Activated T-helper 2 cell treated with anti-CD3 and anti-CD28 coated beads, Interferon-gamma antibody, Interleukin-2, Interleukin-4, amounts not matched to agents 10 μg/mL and 5 μg/mL and 100 μg/mL, durations not matched to agents 14 hours and 24 hours and 36 hours (primary cell): ENCODE measurements at regions of chr12 and their contacts with region 1.

Region 1: GRCh38 chr12:53251477-53252348 is 16.4 kb upstream of the ESPL1 start:
- DNase-seq: peak; percentile 70
- H3K4me3 Mint-ChIP-seq: peak overlapping the region; percentile 94
- H3K27ac Mint-ChIP-seq: peak overlapping the region; percentile 86
- H3K4me1 Mint-ChIP-seq: peaks cover 37% of the 10 kb centered on the region
- H3K27me3 Mint-ChIP-seq: peaks cover 2% of the 10 kb centered on the region

Region 2: GRCh38 chr12:53213348-53213747 is 38.4 kb before region 1 on chr12:
- intact Hi-C with region 1: loop called (anchors 2 kb)
- DNase-seq: peak; percentile 73
- H3K4me3 Mint-ChIP-seq: no peak overlapping the region
- H3K27ac Mint-ChIP-seq: peak overlapping the region; percentile 7
- H3K4me1 Mint-ChIP-seq: peaks cover 59% of the 10 kb centered on the region
- H3K27me3 Mint-ChIP-seq: no peaks in the 10 kb centered on the region

Region 3: DNA sequence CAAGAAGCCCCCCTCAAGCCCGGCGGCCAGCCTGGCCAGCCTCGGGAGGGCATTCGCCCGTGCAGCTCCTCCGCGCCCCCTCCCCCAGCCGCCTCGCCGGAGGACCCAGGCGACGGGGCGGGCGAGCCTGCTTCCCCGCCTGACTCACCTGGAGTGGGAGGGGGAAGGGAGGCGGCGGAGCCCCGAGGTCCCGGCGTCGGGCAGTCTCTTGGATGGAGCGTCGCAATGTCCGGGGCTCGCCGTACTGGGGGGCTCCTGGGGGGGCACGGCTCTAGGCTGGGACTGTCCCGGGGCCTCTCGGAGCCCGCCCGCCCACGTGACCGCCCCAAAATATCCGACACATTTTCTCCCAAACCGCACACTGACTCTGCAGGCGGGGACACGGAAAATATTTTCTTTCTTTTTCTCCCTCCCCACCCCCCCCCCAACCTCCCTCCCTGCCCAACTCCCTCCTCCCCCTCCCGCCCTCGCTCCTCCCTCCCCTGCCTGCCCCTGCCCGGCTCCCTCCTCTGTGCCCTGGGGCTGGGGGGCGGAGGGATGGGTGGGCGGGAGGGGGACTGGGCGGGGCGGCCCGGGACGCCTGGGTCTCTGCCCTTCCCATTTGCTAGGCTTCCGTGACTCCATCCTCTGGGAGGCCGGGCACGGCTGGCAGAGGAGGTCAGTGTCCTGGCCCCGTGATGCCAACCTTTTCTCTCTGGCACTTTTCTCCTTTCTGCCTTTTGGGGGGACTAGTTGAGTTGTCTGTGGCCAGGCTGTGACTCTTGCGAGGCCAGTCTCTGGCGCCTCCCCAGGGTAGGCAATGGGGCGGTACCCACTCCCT is 19.7 kb before region 1 on chr12 and contains the start of gene RARG:
- intact Hi-C with region 1: loop called (anchors 2 kb)
- DNase-seq: peak; percentile 39
- H3K4me3 Mint-ChIP-seq: peak within 1 kb of the TSS; percentile 78
- H3K27ac Mint-ChIP-seq: peak within 1 kb of the TSS; percentile 79
- H3K4me1 Mint-ChIP-seq: peaks cover 38% of the 10 kb centered on the region
- H3K27me3 Mint-ChIP-seq: no peaks in the 10 kb centered on the region
- total RNA-seq, gene RARG: 38.5 and 40.1 TPM in 2 replicates

Region 4: DNA sequence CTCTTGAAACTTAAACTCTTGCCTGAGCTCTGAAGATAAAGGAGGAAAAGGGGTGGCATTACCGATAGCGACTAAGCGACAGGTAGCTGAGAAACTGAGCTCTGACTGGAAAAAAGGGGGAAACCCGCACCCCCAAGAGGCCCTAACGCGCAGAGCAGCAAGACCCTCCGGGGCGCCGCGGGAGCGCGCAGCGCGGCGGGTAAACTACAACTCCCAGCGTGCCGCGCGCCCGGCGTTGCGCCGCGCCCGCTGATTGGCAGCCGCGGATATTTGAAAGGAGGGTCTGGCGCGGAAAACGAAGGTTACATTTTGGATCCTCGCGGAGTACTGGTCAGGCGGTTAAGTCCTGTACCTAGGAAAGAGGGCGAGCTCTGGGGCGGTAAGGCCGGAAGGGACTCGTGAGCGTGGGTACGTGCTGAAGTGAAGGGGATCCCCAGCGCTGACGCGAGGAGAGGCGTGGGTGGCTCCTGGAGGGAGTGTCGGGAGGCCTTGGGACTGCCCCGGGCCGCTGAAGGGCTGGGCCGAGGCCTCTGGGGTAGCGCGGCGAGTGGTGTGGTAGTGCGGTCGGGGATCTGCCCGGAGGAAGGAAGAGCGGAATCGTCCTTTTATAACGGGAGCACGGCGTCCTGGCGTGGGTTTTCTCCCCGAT is 16.4 kb after region 1 on chr12 and contains the start of gene ESPL1:
- intact Hi-C with region 1: loop called (anchors 1 kb)
- DNase-seq: peak; percentile 79
- H3K4me3 Mint-ChIP-seq: peak within 1 kb of the TSS; percentile 92
- H3K27ac Mint-ChIP-seq: peak within 1 kb of the TSS; percentile 91
- H3K4me1 Mint-ChIP-seq: peaks cover 34% of the 10 kb centered on the region
- H3K27me3 Mint-ChIP-seq: no peaks in the 10 kb centered on the region
- total RNA-seq, gene ESPL1: 72.6 and 75.3 TPM in 2 replicates

Region 5: GRCh38 chr12:53279283-53279869 is 27.7 kb after region 1 on chr12:
- intact Hi-C with region 1: no loop called
- DNase-seq: no peak
- H3K4me3 Mint-ChIP-seq: no peak overlapping the region
- H3K27ac Mint-ChIP-seq: no peak overlapping the region
- H3K4me1 Mint-ChIP-seq: peaks cover 5% of the 10 kb centered on the region
- H3K27me3 Mint-ChIP-seq: no peaks in the 10 kb centered on the region